GM12878 (cell line): ENCODE measurements at regions of chr14 and their contacts with region 1.

Region 1: GRCh38 chr14:71764701-71765382 is 167.4 kb upstream of the RGS6 start:
- DNase-seq: no peak
- ATAC-seq: no peak
- H3K4me3 ChIP-seq: no peak overlapping the region
- H3K27ac ChIP-seq: no peak overlapping the region
- H3K4me1 ChIP-seq: no peaks in the 10 kb centered on the region
- H3K27me3 ChIP-seq: no peaks in the 10 kb centered on the region; a peak in 1 of 4 replicates
- CTCF ChIP-seq: no peak
- EP300 ChIP-seq: no peak
- POLR2A ChIP-seq: no peak
- RAD21 ChIP-seq: no peak

Region 2: DNA sequence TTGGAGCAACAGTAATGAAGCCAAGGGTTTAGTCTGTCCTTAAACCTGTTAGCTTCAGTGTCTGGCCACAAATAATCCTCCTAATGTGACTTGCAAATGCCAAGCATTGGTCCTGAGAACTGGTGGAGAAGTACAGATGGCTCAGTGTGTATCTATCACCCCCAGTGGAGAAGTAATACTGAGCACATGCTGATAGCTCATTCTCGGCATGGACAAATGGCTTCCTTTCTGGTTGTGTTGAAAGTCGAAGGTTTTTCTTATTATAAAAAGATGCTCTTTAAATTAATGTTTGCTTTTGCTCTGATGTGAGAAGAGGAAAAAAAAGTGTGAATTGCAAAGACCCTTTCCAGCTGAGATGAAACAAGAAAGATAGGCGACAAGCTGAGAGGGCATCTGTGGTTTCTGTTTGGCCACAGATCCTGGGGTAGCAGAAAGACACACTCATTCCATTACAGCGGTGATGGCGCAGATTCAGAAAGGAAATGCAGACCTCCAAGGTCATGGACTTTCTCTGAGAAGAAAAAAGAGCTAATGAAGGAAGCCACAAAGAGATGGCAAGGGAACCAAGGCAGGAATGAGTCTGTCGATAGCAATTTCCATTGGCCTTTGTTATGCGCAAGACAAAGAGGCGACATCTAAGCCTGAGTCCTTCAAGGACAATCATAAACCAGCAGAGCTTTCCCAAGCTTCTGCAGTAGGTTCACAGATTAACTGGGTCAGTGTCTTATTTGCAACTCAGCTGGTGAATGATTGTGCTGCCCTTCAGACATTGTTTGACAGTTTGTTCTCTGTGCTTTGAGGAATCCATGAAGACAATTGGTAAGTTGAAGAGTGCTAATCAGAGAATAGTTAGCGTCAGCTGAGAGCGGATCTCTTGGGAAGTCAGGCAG is 11.9 kb after region 1 on chr14:
- CTCF ChIA-PET with region 1: interaction called, 9 read pairs
- POLR2A ChIA-PET with region 1: no interaction called
- RAD21 ChIA-PET with region 1: interaction called, 3 read pairs
- SMC1A ChIA-PET with region 1: interaction called, 25 read pairs
- in situ Hi-C with region 1: no loop called
- intact Hi-C with region 1: no loop called
- DNase-seq: peak; percentile 25
- ATAC-seq: peak; percentile 84
- H3K4me3 ChIP-seq: no peak overlapping the region
- H3K27ac ChIP-seq: no peak overlapping the region
- H3K4me1 ChIP-seq: no peaks in the 10 kb centered on the region
- H3K27me3 ChIP-seq: no peaks in the 10 kb centered on the region
- CTCF ChIP-seq: 0 out of 6 replicates have a peak, but pooled peaks of 1 of the 3 experiments have one; percentile 7
- EP300 ChIP-seq: no peak
- POLR2A ChIP-seq: no peak
- RAD21 ChIP-seq: no peak

Region 3: DNA sequence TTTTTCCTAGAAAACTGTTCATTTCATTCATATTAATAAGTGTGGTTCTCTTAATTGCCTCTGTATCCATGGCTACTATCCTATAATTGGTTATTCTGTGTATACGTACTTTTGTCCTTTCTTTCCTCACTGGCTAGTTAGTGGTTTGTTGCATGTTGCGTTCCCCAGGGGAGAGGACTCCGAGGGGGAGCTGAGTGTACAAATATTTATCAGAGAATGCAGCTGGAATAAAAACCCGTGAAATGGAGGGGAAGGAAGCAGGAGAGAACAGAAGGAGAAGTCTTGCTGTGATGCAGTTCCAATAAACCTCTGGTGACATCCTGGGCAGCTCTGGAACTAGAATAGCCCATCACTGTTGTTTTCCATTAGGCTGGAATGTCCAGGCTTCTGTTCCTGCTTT is 50.3 kb after region 1 on chr14:
- CTCF ChIA-PET with region 1: no interaction called
- POLR2A ChIA-PET with region 1: no interaction called
- RAD21 ChIA-PET with region 1: no interaction called
- SMC1A ChIA-PET with region 1: no interaction called
- in situ Hi-C with region 1: no loop called
- intact Hi-C with region 1: no loop called
- DNase-seq: no peak
- ATAC-seq: no peak
- H3K4me3 ChIP-seq: no peak overlapping the region
- H3K27ac ChIP-seq: no peak overlapping the region
- H3K4me1 ChIP-seq: no peaks in the 10 kb centered on the region
- H3K27me3 ChIP-seq: no peaks in the 10 kb centered on the region; a peak in 1 of 4 replicates
- CTCF ChIP-seq: no peak
- EP300 ChIP-seq: no peak
- POLR2A ChIP-seq: no peak
- RAD21 ChIP-seq: no peak